Activated CD4-positive, alpha-beta T cell treated with anti-CD3 and anti-CD28 coated beads, Interleukin-2, amount 10 ng/mL, durations not matched to agents 7 days and 5 days (primary cell): ENCODE measurements at regions of chr7 and their contacts with region 1.

Region 1: DNA sequence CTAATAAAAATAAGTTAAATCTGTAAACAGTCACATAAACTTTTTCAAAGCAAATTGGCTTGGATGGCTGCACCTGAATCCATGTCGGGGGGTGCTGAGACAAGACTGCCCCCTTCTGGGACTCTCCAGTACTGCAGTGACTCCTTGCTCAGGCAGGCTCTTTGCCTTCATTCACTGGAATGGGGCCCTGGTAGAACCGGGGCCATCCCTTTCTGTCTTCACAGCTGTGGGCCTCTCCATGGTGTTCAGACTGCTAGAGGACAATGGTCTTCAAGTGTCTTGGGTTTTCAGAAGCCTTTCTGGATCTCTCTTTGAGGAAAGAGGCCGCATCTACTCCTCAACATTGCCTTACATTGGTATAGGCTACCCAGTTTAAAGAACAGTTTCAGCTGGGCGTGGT is 16.1 kb upstream of the IMPDH1 start:
- DNase-seq: peak; percentile 84
- H3K4me3 Mint-ChIP-seq: no peak overlapping the region
- H3K27ac Mint-ChIP-seq: no peak overlapping the region
- H3K4me1 Mint-ChIP-seq: peaks cover 4% of the 10 kb centered on the region
- H3K27me3 Mint-ChIP-seq: peaks cover 7% of the 10 kb centered on the region

Region 2: DNA sequence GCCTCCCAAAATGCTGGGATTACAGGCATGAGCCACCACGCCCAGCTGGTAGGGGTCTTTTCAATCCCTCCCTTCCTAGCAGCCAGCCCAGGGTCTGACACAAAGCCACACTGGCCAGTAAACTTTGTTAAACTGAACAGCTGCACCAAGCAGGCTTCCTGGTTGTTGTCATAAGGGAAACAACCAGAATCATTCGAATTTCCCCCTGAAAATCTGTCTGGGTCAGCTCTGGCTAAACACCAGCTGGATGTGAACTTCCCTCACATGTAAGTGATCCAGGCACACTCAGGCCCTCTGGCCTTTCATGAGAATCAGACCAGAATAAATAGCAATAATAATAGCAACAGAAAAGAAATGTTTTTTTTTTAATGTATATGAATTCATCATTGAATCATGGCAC is 23.5 kb before region 1 on chr7:
- CTCF ChIA-PET with region 1: interaction called, 55 read pairs
- POLR2A ChIA-PET with region 1: no interaction called
- DNase-seq: no peak
- H3K4me3 Mint-ChIP-seq: no peak overlapping the region
- H3K27ac Mint-ChIP-seq: no peak overlapping the region
- H3K4me1 Mint-ChIP-seq: peaks cover 29% of the 10 kb centered on the region
- H3K27me3 Mint-ChIP-seq: no peaks in the 10 kb centered on the region

Region 3: DNA sequence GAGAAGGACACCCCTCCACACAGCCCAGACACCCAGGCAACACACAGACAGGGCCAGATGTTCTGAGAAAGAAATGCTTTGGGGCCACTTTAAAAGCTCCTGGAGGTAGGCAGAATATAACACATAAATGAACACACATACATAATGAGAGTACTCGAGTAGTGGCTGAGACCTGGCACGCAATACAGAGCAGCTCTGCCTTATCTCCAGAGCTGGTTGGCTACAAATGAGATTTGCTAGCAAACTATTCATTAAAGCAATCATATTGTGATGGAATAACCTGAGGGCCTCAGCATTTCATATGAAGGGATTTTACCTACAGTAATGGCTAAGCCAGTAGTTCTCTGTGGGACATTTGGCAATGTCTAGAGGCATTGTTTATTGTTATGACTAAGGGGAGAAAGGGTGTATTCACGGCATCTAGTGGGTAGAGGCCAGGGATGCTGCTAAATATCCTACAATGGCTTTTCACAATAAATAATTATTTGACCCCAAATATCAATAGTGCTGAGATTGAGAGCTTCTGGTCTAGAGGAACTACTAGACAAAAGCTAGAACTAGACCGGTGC is 10.5 kb before region 1 on chr7:
- CTCF ChIA-PET with region 1: interaction called, 55 read pairs
- POLR2A ChIA-PET with region 1: no interaction called
- DNase-seq: no peak
- H3K4me3 Mint-ChIP-seq: no peak overlapping the region
- H3K27ac Mint-ChIP-seq: no peak overlapping the region
- H3K4me1 Mint-ChIP-seq: peaks cover 8% of the 10 kb centered on the region
- H3K27me3 Mint-ChIP-seq: peaks cover 21% of the 10 kb centered on the region

Region 4: DNA sequence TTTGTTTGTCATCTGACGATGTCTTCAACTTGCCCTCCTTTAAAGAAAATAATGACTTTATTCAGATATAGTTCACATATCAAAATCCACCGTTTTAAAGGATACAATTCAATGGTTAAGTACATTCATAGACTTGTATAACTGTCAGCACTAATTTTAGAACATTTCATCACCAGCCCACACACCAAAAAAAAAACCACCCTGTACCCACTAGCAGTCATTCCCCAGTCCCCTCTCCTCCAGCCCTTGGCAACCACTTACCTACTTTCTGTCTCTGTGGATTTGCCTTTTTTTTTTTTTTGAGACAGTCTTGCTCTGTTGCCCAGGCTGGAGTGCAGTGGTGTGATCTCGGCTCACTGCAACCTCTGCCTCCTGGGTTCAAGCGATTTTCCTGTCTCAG is 24.6 kb after region 1 on chr7:
- CTCF ChIA-PET with region 1: interaction called, 46 read pairs
- POLR2A ChIA-PET with region 1: interaction called, 4 read pairs
- DNase-seq: no peak
- H3K4me3 Mint-ChIP-seq: no peak overlapping the region
- H3K27ac Mint-ChIP-seq: no peak overlapping the region
- H3K4me1 Mint-ChIP-seq: peaks cover 18% of the 10 kb centered on the region
- H3K27me3 Mint-ChIP-seq: peaks cover 10% of the 10 kb centered on the region